Activated naive CD4-positive, alpha-beta T cell treated with anti-CD3 and anti-CD28 coated beads for 36 hours (primary cell): ENCODE measurements at regions of chr2 and their contacts with region 1.

Region 1: GRCh38 chr2:12856934-12857601 is 140.3 kb downstream of the TRIB2 start:
- DNase-seq: peak; percentile 31
- H3K4me3 Mint-ChIP-seq: no peak overlapping the region
- H3K27ac Mint-ChIP-seq: no peak overlapping the region
- H3K4me1 Mint-ChIP-seq: peaks cover 22% of the 10 kb centered on the region
- H3K27me3 Mint-ChIP-seq: no peaks in the 10 kb centered on the region

Region 2: DNA sequence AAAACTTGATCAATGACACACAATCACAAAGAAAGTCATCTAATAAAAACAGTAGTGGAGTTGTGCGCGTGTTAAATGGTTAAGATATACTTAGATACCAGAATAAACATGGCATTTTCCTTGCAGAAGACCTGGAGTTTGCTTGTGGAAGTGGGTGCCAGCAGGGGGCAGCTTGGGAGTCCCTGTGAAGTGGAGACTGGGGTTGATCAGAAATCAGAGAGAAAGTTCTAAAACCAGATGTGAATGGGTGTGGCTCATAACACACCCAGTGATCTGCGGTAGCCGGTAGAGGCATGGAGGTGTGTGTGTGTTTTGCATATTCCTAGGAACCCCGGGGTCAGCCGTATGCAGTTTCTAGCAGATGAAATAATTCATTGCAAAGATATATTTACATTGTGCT is 440.5 kb before region 1 on chr2:
- CTCF ChIA-PET with region 1: no interaction called
- intact Hi-C with region 1: loop called (anchors 10 kb)
- DNase-seq: peak; percentile 72
- H3K4me3 Mint-ChIP-seq: no peak overlapping the region
- H3K27ac Mint-ChIP-seq: no peak overlapping the region
- H3K4me1 Mint-ChIP-seq: peaks cover 34% of the 10 kb centered on the region
- H3K27me3 Mint-ChIP-seq: no peaks in the 10 kb centered on the region

Region 3: DNA sequence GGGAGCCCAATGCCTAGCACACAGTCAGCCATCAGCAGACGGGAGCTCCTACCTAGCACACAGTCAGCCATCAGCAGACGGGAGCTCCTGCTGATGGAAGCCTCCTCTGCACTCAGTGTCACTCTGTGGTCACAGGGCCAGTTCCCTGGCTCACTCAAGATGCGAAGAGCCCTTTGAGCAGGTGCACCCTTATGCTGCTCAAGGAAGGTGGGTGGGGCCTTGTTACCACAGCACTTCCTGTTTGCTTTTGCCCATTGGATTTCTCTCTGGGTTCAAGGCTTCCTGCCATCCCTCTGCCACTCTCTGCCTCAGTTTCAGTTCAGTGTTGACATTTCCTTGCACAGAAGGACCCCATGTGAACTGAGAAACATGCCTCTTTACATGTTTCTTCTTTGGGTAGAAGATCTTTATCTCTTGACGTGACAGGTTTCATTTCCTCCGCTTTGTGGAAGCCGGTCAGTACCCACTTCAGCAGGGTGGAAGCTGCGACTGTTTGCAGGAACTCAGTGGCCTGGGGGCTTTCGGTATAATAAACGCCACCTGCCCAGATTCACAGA is 128.8 kb before region 1 on chr2:
- CTCF ChIA-PET with region 1: no interaction called
- intact Hi-C with region 1: loop called (anchors 2 kb)
- DNase-seq: peak; percentile 78
- H3K4me3 Mint-ChIP-seq: peak overlapping the region; percentile 56
- H3K27ac Mint-ChIP-seq: peak overlapping the region; percentile 48
- H3K4me1 Mint-ChIP-seq: peaks cover 79% of the 10 kb centered on the region
- H3K27me3 Mint-ChIP-seq: no peaks in the 10 kb centered on the region

Region 4: GRCh38 chr2:12931186-12931844 is 74.2 kb after region 1 on chr2:
- CTCF ChIA-PET with region 1: interaction called, 3 read pairs
- intact Hi-C with region 1: loop called (anchors 5 kb)
- DNase-seq: no peak
- H3K4me3 Mint-ChIP-seq: no peak overlapping the region
- H3K27ac Mint-ChIP-seq: no peak overlapping the region
- H3K4me1 Mint-ChIP-seq: peaks cover 8% of the 10 kb centered on the region
- H3K27me3 Mint-ChIP-seq: peaks cover 2% of the 10 kb centered on the region

Region 5: DNA sequence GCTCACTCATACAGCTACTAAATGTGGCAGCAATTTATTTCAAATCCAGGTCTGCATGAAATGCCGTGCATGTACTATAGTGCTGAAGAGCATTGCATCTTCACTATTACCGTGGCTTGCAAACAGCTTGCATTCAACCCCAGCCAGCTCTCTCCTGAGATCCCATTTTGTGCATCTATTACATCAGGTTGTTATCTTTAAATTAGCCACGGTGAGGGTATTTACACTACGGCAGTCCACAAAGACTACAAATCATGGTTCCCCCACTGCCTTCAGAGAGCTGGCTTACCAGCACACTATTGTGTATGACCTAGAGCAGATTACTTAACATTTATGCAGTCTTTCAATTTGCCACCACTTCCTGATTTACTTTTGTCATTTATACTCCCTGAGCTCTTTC is 1154.1 kb after region 1 on chr2:
- CTCF ChIA-PET with region 1: no interaction called
- intact Hi-C with region 1: loop called (anchors 5 kb)
- DNase-seq: no peak
- H3K4me3 Mint-ChIP-seq: no peak overlapping the region
- H3K27ac Mint-ChIP-seq: no peak overlapping the region
- H3K4me1 Mint-ChIP-seq: no peaks in the 10 kb centered on the region
- H3K27me3 Mint-ChIP-seq: no peaks in the 10 kb centered on the region